ENCODE measurements at regions of chr1 and their contacts with region 1.

Region 1: DNA sequence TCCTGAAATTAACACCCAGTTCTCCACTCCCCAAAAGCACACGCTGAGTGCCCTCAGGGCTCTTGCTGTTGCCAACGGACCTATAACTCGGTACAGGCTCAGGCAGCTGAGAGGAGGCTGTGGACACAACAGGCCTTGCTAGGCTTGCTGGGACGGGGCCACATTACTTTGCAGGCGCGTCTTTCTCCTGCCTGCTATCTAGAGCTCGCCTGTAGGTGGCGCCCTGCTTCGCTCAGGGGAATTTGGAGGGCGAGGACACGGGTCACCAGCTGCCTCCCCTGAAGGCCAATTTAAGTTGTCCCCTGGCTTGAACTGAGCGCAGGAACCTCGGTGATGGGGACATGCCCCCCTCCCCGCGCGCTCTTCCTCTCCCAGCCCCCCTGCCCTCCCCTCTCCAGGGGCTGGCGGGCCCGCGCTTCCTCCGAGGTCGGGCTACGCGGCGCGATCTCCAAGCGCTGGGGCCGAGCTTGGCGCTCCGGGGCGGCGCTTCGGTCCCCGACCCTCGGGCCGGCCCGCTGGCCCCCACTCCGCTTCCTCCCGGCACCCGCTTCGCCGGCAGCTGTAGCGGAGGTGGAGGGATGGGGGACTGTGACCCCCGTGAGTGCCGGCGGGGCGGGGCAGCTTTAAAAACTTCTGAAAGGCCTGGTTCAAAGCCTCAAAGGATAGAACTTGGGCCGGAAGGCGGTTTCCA is 32.4 kb upstream of the NFIA start:
- DNase-seq: peak; percentile 77 to 81
- H3K4me3 ChIP-seq: peak overlapping the region; percentile 40
- H3K4me3 Mint-ChIP-seq: peak overlapping the region; percentile 65
- H3K27ac Mint-ChIP-seq: no peak overlapping the region
- H3K4me1 ChIP-seq: no peaks in the 10 kb centered on the region
- H3K4me1 Mint-ChIP-seq: no peaks in the 10 kb centered on the region
- H3K27me3 ChIP-seq: no peaks in the 10 kb centered on the region
- H3K27me3 Mint-ChIP-seq: peaks cover 7% of the 10 kb centered on the region
- CTCF ChIP-seq: peak; percentile 77

Region 2: GRCh38 chr1:61077676-61078541 is 27.9 kb after region 1 on chr1:
- CTCF ChIA-PET with region 1: interaction called, 3 read pairs
- POLR2A ChIA-PET with region 1: no interaction called
- intact Hi-C with region 1: loop called (anchors 2 kb)
- DNase-seq: peak; percentile 91 to 93
- H3K4me3 ChIP-seq: peak overlapping the region; percentile 39
- H3K4me3 Mint-ChIP-seq: peak overlapping the region; percentile 96
- H3K27ac Mint-ChIP-seq: peak overlapping the region; percentile 86
- H3K4me1 ChIP-seq: no peaks in the 10 kb centered on the region
- H3K4me1 Mint-ChIP-seq: no peaks in the 10 kb centered on the region
- H3K27me3 ChIP-seq: no peaks in the 10 kb centered on the region
- H3K27me3 Mint-ChIP-seq: peaks cover 3% of the 10 kb centered on the region
- CTCF ChIP-seq: no peak

Region 3: DNA sequence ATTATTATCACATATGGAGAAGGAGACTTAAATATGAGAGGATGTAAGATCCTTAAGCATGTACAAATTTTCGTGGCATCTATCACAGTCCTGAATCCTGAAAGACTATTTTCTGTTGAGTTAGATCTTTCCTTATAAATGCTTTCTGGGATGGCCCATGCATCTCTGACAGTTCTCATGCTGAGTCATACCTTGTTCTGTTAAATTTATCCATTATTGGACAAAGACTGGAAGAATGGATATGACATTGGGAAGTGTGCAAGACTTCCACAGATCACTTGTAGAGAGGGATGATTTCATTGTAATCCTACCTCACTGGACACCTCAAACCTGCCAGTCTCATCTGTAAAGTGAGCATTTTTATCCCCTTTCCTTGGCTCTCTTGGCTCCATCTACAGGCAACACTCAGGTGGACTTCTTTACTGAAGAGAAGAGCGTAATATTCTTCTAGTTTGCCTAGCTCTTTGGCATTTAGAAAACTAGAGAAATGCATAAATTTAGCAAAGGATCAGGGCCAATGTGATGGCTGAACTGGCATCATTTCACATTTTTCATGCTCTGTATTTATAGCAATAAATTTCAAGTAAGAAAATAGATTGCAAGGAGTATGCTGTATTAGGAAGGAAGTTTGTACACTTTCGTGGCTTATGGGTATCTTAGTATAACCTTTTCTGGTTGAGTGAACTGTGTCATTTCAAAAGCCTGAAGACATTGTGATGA is 160.6 kb after region 1 on chr1:
- CTCF ChIA-PET with region 1: interaction called, 14 read pairs
- POLR2A ChIA-PET with region 1: no interaction called
- intact Hi-C with region 1: loop called (anchors 2 kb)
- DNase-seq: peak in 1 of 2 experiments; percentile 1
- H3K4me3 ChIP-seq: no peak overlapping the region
- H3K4me3 Mint-ChIP-seq: no peak overlapping the region
- H3K27ac Mint-ChIP-seq: no peak overlapping the region
- H3K4me1 ChIP-seq: no peaks in the 10 kb centered on the region
- H3K4me1 Mint-ChIP-seq: no peaks in the 10 kb centered on the region
- H3K27me3 ChIP-seq: no peaks in the 10 kb centered on the region
- H3K27me3 Mint-ChIP-seq: no peaks in the 10 kb centered on the region
- CTCF ChIP-seq: peak in 1 of 2 experiments; percentile 21

Region 4: DNA sequence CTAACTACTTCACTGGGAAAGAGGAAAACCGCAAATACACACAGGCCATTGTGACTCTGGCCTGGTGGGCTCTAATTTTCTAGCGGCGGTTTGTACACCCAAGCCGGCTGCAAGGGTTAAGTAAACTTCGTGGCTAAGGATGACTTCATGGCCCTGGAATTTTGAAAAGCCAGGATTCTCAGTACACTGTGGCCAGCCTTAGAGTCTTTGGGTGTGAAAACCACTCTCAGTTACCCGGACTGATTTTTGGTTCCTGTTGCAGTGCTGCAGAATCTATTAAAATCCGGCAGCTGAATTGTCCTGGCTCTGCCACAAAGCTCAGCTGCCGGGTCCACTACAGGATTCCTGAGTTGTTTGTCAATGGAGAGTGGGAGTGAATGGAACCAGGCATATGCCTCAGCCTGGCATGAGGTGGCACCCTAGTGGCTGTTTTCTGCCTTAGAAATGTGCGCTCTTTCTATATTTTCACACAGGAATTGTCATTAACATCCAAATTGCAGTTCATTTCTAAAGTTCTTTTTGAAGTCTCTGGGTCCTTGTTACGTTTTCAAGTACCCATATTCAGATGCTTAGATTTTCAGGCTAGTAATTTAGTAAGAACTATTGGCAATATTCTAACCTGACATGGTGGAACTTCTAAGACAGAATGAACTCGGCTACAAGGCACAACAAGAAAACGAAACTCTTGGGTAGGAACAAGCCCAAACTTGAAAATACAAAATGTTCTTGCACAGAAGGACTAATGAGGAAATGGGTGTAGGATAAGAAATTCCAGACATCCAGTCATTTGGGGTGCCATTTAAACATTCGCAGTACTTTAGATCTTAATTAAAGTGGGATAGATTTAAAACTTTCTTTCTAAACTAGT is 288.2 kb after region 1 on chr1:
- CTCF ChIA-PET with region 1: no interaction called
- POLR2A ChIA-PET with region 1: no interaction called
- intact Hi-C with region 1: loop called (anchors 1 kb)
- DNase-seq: peak; percentile 36 to 48
- H3K4me3 ChIP-seq: no peak overlapping the region
- H3K4me3 Mint-ChIP-seq: peak overlapping the region; percentile 50
- H3K27ac Mint-ChIP-seq: no peak overlapping the region
- H3K4me1 ChIP-seq: peaks cover 12% of the 10 kb centered on the region
- H3K4me1 Mint-ChIP-seq: peaks cover 8% of the 10 kb centered on the region
- H3K27me3 ChIP-seq: no peaks in the 10 kb centered on the region
- H3K27me3 Mint-ChIP-seq: no peaks in the 10 kb centered on the region
- CTCF ChIP-seq: peak; percentile 33 to 43

Measured in Caco-2 (cell line).